ENCODE measurements at regions of chr1 and their contacts with region 1.

Region 1: DNA sequence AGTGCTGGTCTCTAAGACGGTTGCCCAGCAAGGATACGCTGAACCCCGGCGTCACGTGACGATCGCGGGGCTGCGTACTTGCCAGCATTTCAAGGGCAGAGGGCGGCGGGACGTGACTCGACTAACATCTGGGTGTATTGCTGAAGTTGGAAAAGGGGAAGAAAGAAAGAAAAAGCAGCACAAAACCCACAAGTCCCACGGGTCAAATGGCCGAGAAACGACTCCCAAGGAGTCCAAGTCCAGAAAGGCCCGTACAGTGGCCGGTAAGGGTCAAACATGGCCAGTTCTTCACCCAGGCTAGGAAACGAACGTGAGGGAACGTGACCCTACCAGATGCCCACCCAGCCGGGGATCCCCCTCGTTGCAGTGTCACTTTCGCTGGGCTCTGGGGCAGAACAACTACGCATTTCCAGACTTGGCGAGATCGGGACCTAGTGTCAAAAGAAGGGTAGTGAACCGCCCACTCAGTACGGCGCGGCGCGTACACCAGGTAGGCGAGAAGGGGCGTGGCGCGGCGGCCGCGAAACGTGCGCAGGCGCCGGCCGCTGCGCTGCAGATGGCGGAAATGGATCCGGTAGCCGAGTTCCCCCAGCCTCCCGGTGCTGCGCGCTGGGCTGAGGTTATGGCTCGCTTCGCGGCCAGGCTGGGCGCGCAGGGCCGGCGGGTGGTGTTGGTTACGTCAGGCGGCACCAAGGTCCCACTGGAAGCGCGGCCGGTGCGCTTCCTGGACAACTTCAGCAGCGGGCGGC is at the starts of genes PPCS and ZMYND12:
- DNase-seq: peak; percentile 99
- ATAC-seq: peak; percentile 88
- H3K4me3 ChIP-seq: peak within 1 kb of the TSS; percentile 89 to 99 (median 95)
- H3K4me3 Mint-ChIP-seq: peak within 1 kb of the TSS; percentile 99
- H3K27ac ChIP-seq: peak within 1 kb of the TSS; percentile 96 to 98
- H3K27ac Mint-ChIP-seq: peak within 1 kb of the TSS; percentile 99
- H3K4me1 ChIP-seq: peaks cover 18 to 21% of the 10 kb centered on the region in 2 donors
- H3K4me1 Mint-ChIP-seq: peaks cover 40% of the 10 kb centered on the region
- H3K27me3 ChIP-seq: no peaks in the 10 kb centered on the region
- H3K27me3 Mint-ChIP-seq: no peaks in the 10 kb centered on the region
- CTCF ChIP-seq: no peak
- total RNA-seq, gene PPCS: 68.2 and 74.9 TPM in 2 replicates
- total RNA-seq, gene ZMYND12: 0.27 and 0.79 TPM in 2 replicates

Region 2: DNA sequence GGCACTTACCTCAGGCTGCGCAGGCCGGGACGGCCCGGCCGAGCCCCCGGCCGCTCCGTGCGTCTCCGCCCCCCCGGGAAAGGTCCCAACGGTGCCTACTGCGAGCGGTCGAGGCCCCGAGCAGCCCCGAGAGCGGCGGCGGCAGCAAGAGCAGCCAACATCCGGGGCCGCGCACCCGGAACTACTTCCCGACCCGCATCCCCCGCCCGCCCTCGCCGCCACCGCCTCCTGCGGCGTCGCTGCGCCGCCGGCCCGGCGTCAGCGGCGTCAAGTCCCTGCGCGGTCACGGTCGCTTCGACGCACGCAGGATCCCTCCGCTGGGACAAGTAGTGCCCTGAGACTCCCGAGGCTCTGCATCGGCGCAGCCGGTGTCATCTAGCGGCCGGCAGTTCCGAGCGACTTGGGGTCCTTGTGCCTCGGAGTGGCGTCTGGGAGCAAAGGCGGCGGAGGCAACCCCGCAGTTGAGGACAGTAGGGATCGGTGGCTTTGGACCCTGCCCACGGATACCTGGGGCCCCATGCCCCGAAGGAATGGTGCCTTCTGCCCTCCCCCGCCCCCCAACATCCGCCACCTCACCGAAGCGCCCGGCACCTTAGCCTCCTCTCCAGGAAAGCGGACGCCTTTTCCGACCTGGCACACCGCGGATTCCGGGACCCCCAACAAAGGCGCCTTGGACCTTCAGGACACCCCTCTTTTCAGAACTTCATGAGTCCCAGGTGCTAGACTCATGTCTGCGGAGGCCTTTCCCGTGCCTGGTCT is 121.0 kb before region 1 on chr1 and contains the start of gene FOXJ3:
- CTCF ChIA-PET with region 1: no interaction called
- POLR2A ChIA-PET with region 1: no interaction called
- intact Hi-C with region 1: loop called (anchors 1 kb)
- DNase-seq: peak; percentile 97
- ATAC-seq: peak; percentile 90
- H3K4me3 ChIP-seq: peak within 1 kb of the TSS; percentile 63 to 97 (median 89)
- H3K4me3 Mint-ChIP-seq: peak within 1 kb of the TSS; percentile 95
- H3K27ac ChIP-seq: peak within 1 kb of the TSS; percentile 75 to 91
- H3K27ac Mint-ChIP-seq: peak within 1 kb of the TSS; percentile 90
- H3K4me1 ChIP-seq: peaks cover 20 to 24% of the 10 kb centered on the region in 2 donors
- H3K4me1 Mint-ChIP-seq: peaks cover 44% of the 10 kb centered on the region
- H3K27me3 ChIP-seq: no peaks in the 10 kb centered on the region
- H3K27me3 Mint-ChIP-seq: no peaks in the 10 kb centered on the region
- CTCF ChIP-seq: no peak
- total RNA-seq, gene FOXJ3: 76.4 and 80.3 TPM in 2 replicates

Region 3: GRCh38 chr1:42657971-42658879 is 202.0 kb after region 1 on chr1 and contains the start of gene PPIH:
- CTCF ChIA-PET with region 1: no interaction called
- POLR2A ChIA-PET with region 1: interaction called, 3 read pairs
- intact Hi-C with region 1: loop called (anchors 1 kb)
- DNase-seq: peak; percentile 94
- ATAC-seq: peak; percentile 99
- H3K4me3 ChIP-seq: peak within 1 kb of the TSS; percentile 45 to 90 (median 84)
- H3K4me3 Mint-ChIP-seq: peak within 1 kb of the TSS; percentile 99
- H3K27ac ChIP-seq: peak within 1 kb of the TSS; percentile 62 to 76
- H3K27ac Mint-ChIP-seq: peak within 1 kb of the TSS; percentile 93
- H3K4me1 ChIP-seq: peaks cover 15 to 22% of the 10 kb centered on the region in 2 donors
- H3K4me1 Mint-ChIP-seq: peaks cover 32% of the 10 kb centered on the region
- H3K27me3 ChIP-seq: no peaks in the 10 kb centered on the region
- H3K27me3 Mint-ChIP-seq: no peaks in the 10 kb centered on the region
- CTCF ChIP-seq: no peak
- total RNA-seq, gene PPIH: 48.8 and 50.3 TPM in 2 replicates

Region 4: GRCh38 chr1:42816585-42817434 is 360.6 kb after region 1 on chr1 and contains the starts of genes ERMAP and SVBP:
- CTCF ChIA-PET with region 1: no interaction called
- POLR2A ChIA-PET with region 1: no interaction called
- intact Hi-C with region 1: loop called (anchors 1 kb)
- DNase-seq: peak; percentile 97
- ATAC-seq: peak; percentile 86
- H3K4me3 ChIP-seq: peak within 1 kb of the TSS; percentile 57 to 82 (median 77)
- H3K4me3 Mint-ChIP-seq: peak within 1 kb of the TSS; percentile 89
- H3K27ac ChIP-seq: peak within 1 kb of the TSS; percentile 75 to 82
- H3K27ac Mint-ChIP-seq: peak within 1 kb of the TSS; percentile 92
- H3K4me1 ChIP-seq: peaks cover 13% of the 10 kb centered on the region in 2 donors
- H3K4me1 Mint-ChIP-seq: peaks cover 20% of the 10 kb centered on the region
- H3K27me3 ChIP-seq: no peaks in the 10 kb centered on the region
- H3K27me3 Mint-ChIP-seq: no peaks in the 10 kb centered on the region
- CTCF ChIP-seq: no peak
- total RNA-seq, gene ERMAP: 13.1 and 13.5 TPM in 2 replicates
- total RNA-seq, gene SVBP: 21.9 and 23.2 TPM in 2 replicates

Region 5: DNA sequence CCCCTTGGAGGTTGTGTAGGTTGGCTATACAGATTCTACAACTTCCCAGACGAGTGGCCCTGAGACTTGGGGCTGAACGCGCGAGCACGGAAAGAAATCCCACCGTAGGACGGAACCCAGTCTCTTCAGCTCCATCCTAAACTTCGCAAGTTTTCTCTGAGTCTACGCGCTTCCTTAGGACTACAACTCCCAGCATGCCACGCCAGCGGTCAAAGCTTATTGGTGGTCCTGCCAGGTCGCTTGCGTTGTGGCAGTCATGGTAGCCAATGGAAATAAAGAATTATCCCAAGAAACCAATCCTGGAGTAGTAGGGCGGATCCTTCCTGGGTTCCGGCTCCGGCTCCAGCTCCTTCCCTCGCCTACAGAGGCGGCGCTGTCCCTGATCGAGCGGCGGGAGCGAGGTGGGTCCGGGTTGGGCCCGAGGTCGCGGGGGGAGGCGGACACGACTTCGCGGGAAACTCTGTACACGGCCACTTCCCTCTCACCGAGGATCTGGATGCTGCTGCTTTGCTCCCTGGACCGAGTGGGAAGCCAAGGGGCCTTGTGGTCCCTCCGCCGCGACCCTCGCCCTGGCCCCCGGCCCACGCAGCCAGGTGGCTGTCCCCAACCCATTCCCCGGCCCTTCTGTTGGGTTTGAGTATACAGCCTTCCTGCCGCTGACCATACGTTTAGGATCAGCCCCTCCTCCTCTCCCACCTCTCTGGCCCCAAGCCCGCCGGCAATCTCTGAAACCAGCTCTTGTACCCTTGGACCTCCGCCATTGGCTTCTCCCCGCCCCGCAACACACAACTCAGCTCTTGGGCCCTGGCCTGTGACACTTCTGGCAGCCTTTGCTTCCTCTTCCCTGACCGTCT is 390.3 kb after region 1 on chr1 and contains the start of gene ZNF691:
- CTCF ChIA-PET with region 1: no interaction called
- POLR2A ChIA-PET with region 1: no interaction called
- intact Hi-C with region 1: loop called (anchors 2 kb)
- DNase-seq: peak; percentile 93
- ATAC-seq: peak; percentile 98
- H3K4me3 ChIP-seq: peak within 1 kb of the TSS; percentile 80 to 92 (median 90)
- H3K4me3 Mint-ChIP-seq: peak within 1 kb of the TSS; percentile 95
- H3K27ac ChIP-seq: peak within 1 kb of the TSS; percentile 41 to 76
- H3K27ac Mint-ChIP-seq: peak within 1 kb of the TSS; percentile 91
- H3K4me1 ChIP-seq: peaks cover 17 to 24% of the 10 kb centered on the region in 2 donors
- H3K4me1 Mint-ChIP-seq: peaks cover 46% of the 10 kb centered on the region
- H3K27me3 ChIP-seq: no peaks in the 10 kb centered on the region
- H3K27me3 Mint-ChIP-seq: no peaks in the 10 kb centered on the region
- CTCF ChIP-seq: peak; percentile 16
- total RNA-seq, gene ZNF691: 17.1 and 18.4 TPM in 2 replicates

Region 6: GRCh38 chr1:43650310-43651085 is 1194.3 kb after region 1 on chr1:
- CTCF ChIA-PET with region 1: no interaction called
- POLR2A ChIA-PET with region 1: no interaction called
- intact Hi-C with region 1: loop called (anchors 10 kb)
- DNase-seq: peak; percentile 97
- ATAC-seq: peak; percentile 77
- H3K4me3 ChIP-seq: peak overlapping the region; percentile 82 to 98 (median 92)
- H3K4me3 Mint-ChIP-seq: peak overlapping the region; percentile 92
- H3K27ac ChIP-seq: peak overlapping the region; percentile 84 to 86
- H3K27ac Mint-ChIP-seq: peak overlapping the region; percentile 94
- H3K4me1 ChIP-seq: peaks cover 23 to 25% of the 10 kb centered on the region in 2 donors
- H3K4me1 Mint-ChIP-seq: peaks cover 45% of the 10 kb centered on the region
- H3K27me3 ChIP-seq: no peaks in the 10 kb centered on the region
- H3K27me3 Mint-ChIP-seq: peaks cover under 1% of the 10 kb centered on the region
- CTCF ChIP-seq: no peak

Region 7: GRCh38 chr1:43974443-43975248 is 1518.5 kb after region 1 on chr1 and contains the start of gene ATP6V0B:
- CTCF ChIA-PET with region 1: no interaction called
- POLR2A ChIA-PET with region 1: no interaction called
- intact Hi-C with region 1: loop called (anchors 10 kb)
- DNase-seq: peak; percentile 95
- ATAC-seq: peak; percentile 72
- H3K4me3 ChIP-seq: peak within 1 kb of the TSS; percentile 79 to 97 (median 89)
- H3K4me3 Mint-ChIP-seq: peak within 1 kb of the TSS; percentile 97
- H3K27ac ChIP-seq: peak within 1 kb of the TSS; percentile 89 to 96
- H3K27ac Mint-ChIP-seq: peak within 1 kb of the TSS; percentile 97
- H3K4me1 ChIP-seq: peaks cover 33 to 61% of the 10 kb centered on the region in 2 donors
- H3K4me1 Mint-ChIP-seq: peaks cover 69% of the 10 kb centered on the region
- H3K27me3 ChIP-seq: no peaks in the 10 kb centered on the region
- H3K27me3 Mint-ChIP-seq: no peaks in the 10 kb centered on the region
- CTCF ChIP-seq: no peak
- total RNA-seq, gene ATP6V0B: 91.0 and 94.2 TPM in 2 replicates

Measured in B cell (primary cell).